Aorta (tissue), 5 donors: ENCODE measurements at regions of chr12 and their contacts with region 1.

Region 1: GRCh38 chr12:48119078-48119833 is at the start of gene PFKM:
- DNase-seq: peak; percentile 86 to 89
- ATAC-seq: peak; percentile 96
- H3K4me3 ChIP-seq: peak within 1 kb of the TSS; percentile 96 to 97
- H3K27ac ChIP-seq: peak within 1 kb of the TSS in 1 of 2 donors; percentile 44
- H3K4me1 ChIP-seq: peaks cover 0 to 1% of the 10 kb centered on the region in 2 donors
- H3K27me3 ChIP-seq: no peaks in the 10 kb centered on the region
- total RNA-seq, gene PFKM: 52.2 to 68.8 TPM

Region 2: GRCh38 chr12:47779301-47779942 is 339.8 kb before region 1 on chr12:
- intact Hi-C with region 1: no loop called
- DNase-seq: peak; percentile 92 to 97
- ATAC-seq: peak; percentile 88
- H3K4me3 ChIP-seq: no peak overlapping the region
- H3K27ac ChIP-seq: no peak overlapping the region
- H3K4me1 ChIP-seq: peaks cover 0 to 5% of the 10 kb centered on the region in 2 donors
- H3K27me3 ChIP-seq: no peaks in the 10 kb centered on the region

Region 3: GRCh38 chr12:48105862-48106680 is 13.2 kb before region 1 on chr12 and contains the start of gene SENP1:
- intact Hi-C with region 1: loop called in 1 of 2 experiments (anchors 1 kb)
- DNase-seq: peak; percentile 92 to 97
- ATAC-seq: peak; percentile 97
- H3K4me3 ChIP-seq: peak within 1 kb of the TSS; percentile 54 to 65
- H3K27ac ChIP-seq: peak within 1 kb of the TSS; percentile 85 to 93
- H3K4me1 ChIP-seq: peaks cover 2 to 4% of the 10 kb centered on the region in 2 donors
- H3K27me3 ChIP-seq: no peaks in the 10 kb centered on the region
- total RNA-seq, gene SENP1: 20.6 to 23.0 TPM